CD14-positive monocyte (primary cell): ENCODE measurements at regions of chr4 and their contacts with region 1.

Region 1: GRCh38 chr4:1130316-1131186 is 17.2 kb upstream of the RNF212 start:
- DNase-seq: peak; percentile 72 to 75 (median 73)
- H3K4me3 ChIP-seq: no peak overlapping the region
- H3K4me3 Mint-ChIP-seq: no peak overlapping the region
- H3K27ac ChIP-seq: no peak overlapping the region
- H3K27ac Mint-ChIP-seq: peak overlapping the region in 1 of 7 donors; percentile 75
- H3K4me1 ChIP-seq: peaks cover under 1 to 8% of the 10 kb centered on the region in 2 donors
- H3K4me1 Mint-ChIP-seq: peaks cover 8% of the 10 kb centered on the region
- H3K27me3 ChIP-seq: peaks cover 0 to 3% of the 10 kb centered on the region in 2 donors
- H3K27me3 Mint-ChIP-seq: peaks cover 13 to 27% (median 18%) of the 10 kb centered on the region in 3 donors
- CTCF ChIP-seq: peak; percentile 96

Region 2: GRCh38 chr4:1113311-1114009 is 17.1 kb before region 1 on chr4 and contains the start of gene RNF212:
- intact Hi-C with region 1: no loop called
- DNase-seq: peak in 1 of 3 donors; percentile 17
- H3K4me3 ChIP-seq: peak within 1 kb of the TSS; percentile 32 to 55 (median 43)
- H3K4me3 Mint-ChIP-seq: peak within 1 kb of the TSS; percentile 68 to 69
- H3K27ac ChIP-seq: no peak within 1 kb of the TSS
- H3K27ac Mint-ChIP-seq: no peak within 1 kb of the TSS
- H3K4me1 ChIP-seq: no peaks in the 10 kb centered on the region
- H3K4me1 Mint-ChIP-seq: no peaks in the 10 kb centered on the region
- H3K27me3 ChIP-seq: peaks cover 8 to 20% of the 10 kb centered on the region in 2 donors
- H3K27me3 Mint-ChIP-seq: peaks cover 16 to 43% (median 38%) of the 10 kb centered on the region in 3 donors
- CTCF ChIP-seq: no peak
- polyA plus RNA-seq, gene RNF212: 0.17 to 0.83 TPM in 2 of 3 donors, not detected in the other

Region 3: DNA sequence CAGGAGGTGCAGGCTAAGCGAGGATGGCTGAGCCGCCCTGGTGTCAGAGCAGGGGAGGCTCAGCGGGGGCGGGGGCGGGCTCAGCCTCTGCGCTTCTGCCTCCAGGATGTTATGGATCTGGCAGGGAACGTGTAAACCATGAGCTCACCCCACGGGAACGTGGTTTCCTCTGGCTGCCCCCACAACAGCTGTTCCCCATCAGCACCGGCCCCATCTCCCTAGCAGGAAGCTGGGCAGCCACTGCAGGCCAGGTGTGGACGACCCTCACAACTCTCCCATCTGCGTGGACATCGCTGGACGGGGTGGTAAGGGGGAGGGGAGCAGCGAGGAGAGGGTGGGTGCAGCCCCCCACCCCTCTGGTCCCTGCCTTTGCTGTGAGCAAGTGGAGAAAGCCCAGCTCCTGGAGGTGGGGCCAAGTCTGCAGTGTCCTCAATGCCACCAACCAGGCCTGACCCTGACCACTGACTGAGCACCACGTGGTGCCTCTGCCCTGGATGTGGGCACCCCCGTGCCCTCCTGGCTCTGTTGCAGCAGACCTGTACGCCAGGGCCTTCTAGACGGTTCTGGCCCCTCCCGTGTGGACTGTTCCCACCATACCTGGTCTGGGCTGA is 70.0 kb after region 1 on chr4:
- intact Hi-C with region 1: loop called in 1 of 2 experiments (anchors 5 kb)
- DNase-seq: no peak
- H3K4me3 ChIP-seq: peak overlapping the region in 2 of 3 experiments; percentile 42 to 72
- H3K4me3 Mint-ChIP-seq: peak overlapping the region; percentile 80 to 88
- H3K27ac ChIP-seq: no peak overlapping the region
- H3K27ac Mint-ChIP-seq: no peak overlapping the region
- H3K4me1 ChIP-seq: peaks cover 28 to 30% of the 10 kb centered on the region in 2 donors
- H3K4me1 Mint-ChIP-seq: peaks cover 31% of the 10 kb centered on the region
- H3K27me3 ChIP-seq: no peaks in the 10 kb centered on the region
- H3K27me3 Mint-ChIP-seq: peaks cover 0 to 6% (median 3%) of the 10 kb centered on the region in 3 donors
- CTCF ChIP-seq: no peak

Region 4: GRCh38 chr4:1249148-1249730 is 118.7 kb after region 1 on chr4:
- intact Hi-C with region 1: loop called in 1 of 2 experiments (anchors 5 kb)
- DNase-seq: peak; percentile 75 to 83 (median 82)
- H3K4me3 ChIP-seq: peak overlapping the region; percentile 62 to 81 (median 79)
- H3K4me3 Mint-ChIP-seq: peak overlapping the region; percentile 83 to 88
- H3K27ac ChIP-seq: peak overlapping the region; percentile 81 to 88
- H3K27ac Mint-ChIP-seq: peak overlapping the region; percentile 76 to 93 (median 89)
- H3K4me1 ChIP-seq: peaks cover 31 to 40% of the 10 kb centered on the region in 2 donors
- H3K4me1 Mint-ChIP-seq: peaks cover 40% of the 10 kb centered on the region
- H3K27me3 ChIP-seq: no peaks in the 10 kb centered on the region
- H3K27me3 Mint-ChIP-seq: peaks cover 0 to 6% (median 0%) of the 10 kb centered on the region in 3 donors
- CTCF ChIP-seq: no peak

Region 5: GRCh38 chr4:1266881-1267763 is 136.6 kb after region 1 on chr4:
- intact Hi-C with region 1: loop called (anchors 5 kb)
- DNase-seq: no peak
- H3K4me3 ChIP-seq: no peak overlapping the region
- H3K4me3 Mint-ChIP-seq: no peak overlapping the region
- H3K27ac ChIP-seq: no peak overlapping the region
- H3K27ac Mint-ChIP-seq: peak overlapping the region in 1 of 7 donors; percentile 5
- H3K4me1 ChIP-seq: no peaks in the 10 kb centered on the region
- H3K4me1 Mint-ChIP-seq: peaks cover 3% of the 10 kb centered on the region
- H3K27me3 ChIP-seq: no peaks in the 10 kb centered on the region
- H3K27me3 Mint-ChIP-seq: peaks cover 0 to 8% (median 0%) of the 10 kb centered on the region in 3 donors
- CTCF ChIP-seq: no peak

Region 6: GRCh38 chr4:1351854-1352633 is 221.5 kb after region 1 on chr4:
- intact Hi-C with region 1: loop called (anchors 2 kb)
- DNase-seq: peak; percentile 71 to 80 (median 78)
- H3K4me3 ChIP-seq: no peak overlapping the region
- H3K4me3 Mint-ChIP-seq: peak overlapping the region; percentile 31 to 64
- H3K27ac ChIP-seq: no peak overlapping the region
- H3K27ac Mint-ChIP-seq: peak overlapping the region in 4 of 7 donors; percentile 26 to 89 (median 83)
- H3K4me1 ChIP-seq: peaks cover 14 to 17% of the 10 kb centered on the region in 2 donors
- H3K4me1 Mint-ChIP-seq: peaks cover 20% of the 10 kb centered on the region
- H3K27me3 ChIP-seq: no peaks in the 10 kb centered on the region
- H3K27me3 Mint-ChIP-seq: peaks cover 0 to 2% (median 0%) of the 10 kb centered on the region in 3 donors
- CTCF ChIP-seq: peak; percentile 97